ENCODE measurements at regions of chrX and their contacts with region 1.

Region 1: DNA sequence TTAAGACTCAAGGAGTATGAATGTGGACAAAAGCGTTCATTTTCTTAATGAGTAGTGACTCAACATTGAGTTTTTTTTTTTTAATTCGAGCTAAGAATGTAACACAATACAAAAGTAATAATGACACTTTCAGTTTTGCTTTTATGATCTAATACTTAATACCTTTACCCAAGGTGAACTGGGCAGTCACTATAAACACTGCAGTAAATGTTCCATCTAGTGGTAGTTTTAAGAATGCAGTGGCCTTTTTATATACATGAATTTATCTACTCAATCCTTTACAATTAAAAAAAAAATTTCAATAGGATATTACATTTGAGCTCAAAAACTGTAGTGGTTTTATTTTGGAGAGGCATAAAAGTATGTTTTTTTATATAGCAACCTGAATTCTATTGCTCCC is 33.9 kb downstream of the PDK3 start:
- DNase-seq: no peak
- H3K4me3 ChIP-seq: no peak overlapping the region
- H3K27ac ChIP-seq: no peak overlapping the region
- H3K4me1 ChIP-seq: peaks cover 0 to 6% of the 10 kb centered on the region in 2 donors
- H3K27me3 ChIP-seq: peaks cover 4% of the 10 kb centered on the region
- CTCF ChIP-seq: peak; percentile 36 to 64 (median 53)
- POLR2A ChIP-seq: no peak

Region 2: GRCh38 chrX:24395775-24396174 is 103.2 kb before region 1 on chrX:
- intact Hi-C with region 1: loop called (anchors 5 kb)
- DNase-seq: peak; percentile 34 to 70 (median 61)
- H3K4me3 ChIP-seq: no peak overlapping the region
- H3K27ac ChIP-seq: no peak overlapping the region
- H3K4me1 ChIP-seq: peaks cover 0 to 4% of the 10 kb centered on the region in 2 donors
- H3K27me3 ChIP-seq: peaks cover 33% of the 10 kb centered on the region
- CTCF ChIP-seq: peak; percentile 64 to 88 (median 78)
- POLR2A ChIP-seq: no peak

Region 3: GRCh38 chrX:25105221-25105620 is 606.2 kb after region 1 on chrX:
- intact Hi-C with region 1: no loop called
- DNase-seq: no peak
- H3K4me3 ChIP-seq: no peak overlapping the region
- H3K27ac ChIP-seq: no peak overlapping the region
- H3K4me1 ChIP-seq: no peaks in the 10 kb centered on the region
- H3K27me3 ChIP-seq: peaks cover 15% of the 10 kb centered on the region
- CTCF ChIP-seq: no peak
- POLR2A ChIP-seq: no peak

Measured in adrenal gland (tissue), 19 donors.